ENCODE measurements at regions of chr17 and their contacts with region 1.

Region 1: DNA sequence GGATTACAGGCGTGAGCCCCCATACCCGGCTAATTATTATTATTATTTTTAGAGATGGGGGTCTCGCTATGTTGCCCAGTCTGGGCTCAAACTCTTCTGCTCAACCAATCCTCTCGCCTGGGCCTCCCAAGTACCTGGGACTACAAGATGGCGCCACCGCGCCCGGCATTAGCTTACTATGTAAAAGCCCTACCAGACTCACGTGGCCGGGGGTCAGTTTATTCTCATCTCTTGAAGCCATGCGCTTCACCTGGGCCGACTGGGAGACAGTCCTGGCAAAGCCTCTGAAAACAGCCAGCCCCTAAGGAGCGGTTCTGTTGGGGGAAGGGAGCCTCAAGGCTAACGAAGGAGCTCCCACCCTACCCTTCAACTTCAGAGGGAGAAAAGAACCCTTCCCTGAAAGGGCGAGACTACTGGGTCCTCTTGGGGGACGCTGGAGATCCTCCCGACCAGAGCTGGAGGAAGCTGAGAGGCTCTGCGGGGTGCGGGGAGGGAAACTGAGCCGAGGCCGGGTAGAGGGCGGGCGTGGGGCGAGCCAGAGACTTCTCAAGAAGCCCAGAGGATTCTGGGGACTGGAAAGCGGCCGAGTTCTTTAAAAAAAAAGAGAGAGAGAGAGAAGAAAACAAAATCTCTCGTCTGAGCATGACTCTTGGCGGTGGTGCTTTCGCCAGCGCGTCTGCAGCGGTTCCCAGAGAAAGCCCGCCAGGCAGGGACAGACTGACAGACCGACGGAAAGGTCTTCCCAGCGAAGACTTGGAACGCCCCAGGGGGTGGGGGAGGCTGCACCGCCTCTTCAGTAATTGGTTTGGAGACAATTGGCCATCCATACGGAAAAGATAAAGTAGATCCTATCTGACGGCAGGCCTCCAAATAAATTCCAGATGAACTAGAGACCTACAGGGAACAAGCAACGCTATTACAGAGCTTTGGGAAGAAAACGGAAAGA is 5.6 kb upstream of the TUBG2 start:
- DNase-seq: peak; percentile 73
- ATAC-seq: peak; percentile 90 to 91

Region 2: DNA sequence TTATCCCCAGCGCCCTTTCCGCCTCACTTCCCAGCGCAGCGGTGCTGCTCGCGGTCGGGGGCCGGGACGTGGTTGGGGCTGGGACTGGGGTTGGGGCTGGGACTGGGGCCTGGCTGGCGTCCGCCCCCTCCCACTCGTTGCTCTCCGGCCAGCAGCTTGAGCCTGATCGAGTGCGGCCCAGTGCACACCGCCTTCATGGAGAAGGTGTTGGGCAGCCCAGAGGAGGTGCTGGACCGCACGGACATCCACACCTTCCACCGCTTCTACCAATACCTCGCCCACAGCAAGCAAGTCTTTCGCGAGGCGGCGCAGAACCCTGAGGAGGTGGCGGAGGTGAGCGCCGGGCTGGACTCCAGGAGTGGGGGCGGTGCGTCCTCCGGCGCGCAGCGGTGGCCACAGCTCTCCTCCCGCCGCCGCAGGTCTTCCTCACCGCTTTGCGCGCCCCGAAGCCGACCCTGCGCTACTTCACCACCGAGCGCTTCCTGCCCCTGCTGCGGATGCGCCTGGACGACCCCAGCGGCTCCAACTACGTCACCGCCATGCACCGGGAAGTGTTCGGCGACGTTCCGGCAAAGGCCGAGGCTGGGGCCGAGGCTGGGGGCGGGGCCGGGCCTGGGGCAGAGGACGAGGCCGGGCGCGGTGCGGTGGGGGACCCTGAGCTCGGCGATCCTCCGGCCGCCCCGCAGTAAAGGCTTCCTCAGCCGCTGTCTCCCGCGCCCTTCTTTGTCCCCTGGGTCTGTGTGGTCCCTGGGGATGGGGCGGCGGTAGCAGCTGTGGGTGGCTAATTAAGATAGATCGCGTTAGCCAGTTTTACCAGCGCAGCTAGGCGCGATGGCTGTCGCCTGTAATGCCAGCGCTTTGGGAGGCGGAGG is 99.0 kb before region 1 on chr17:
- intact Hi-C with region 1: no loop called
- DNase-seq: peak; percentile 93
- ATAC-seq: peak; percentile 94 to 95

Region 3: DNA sequence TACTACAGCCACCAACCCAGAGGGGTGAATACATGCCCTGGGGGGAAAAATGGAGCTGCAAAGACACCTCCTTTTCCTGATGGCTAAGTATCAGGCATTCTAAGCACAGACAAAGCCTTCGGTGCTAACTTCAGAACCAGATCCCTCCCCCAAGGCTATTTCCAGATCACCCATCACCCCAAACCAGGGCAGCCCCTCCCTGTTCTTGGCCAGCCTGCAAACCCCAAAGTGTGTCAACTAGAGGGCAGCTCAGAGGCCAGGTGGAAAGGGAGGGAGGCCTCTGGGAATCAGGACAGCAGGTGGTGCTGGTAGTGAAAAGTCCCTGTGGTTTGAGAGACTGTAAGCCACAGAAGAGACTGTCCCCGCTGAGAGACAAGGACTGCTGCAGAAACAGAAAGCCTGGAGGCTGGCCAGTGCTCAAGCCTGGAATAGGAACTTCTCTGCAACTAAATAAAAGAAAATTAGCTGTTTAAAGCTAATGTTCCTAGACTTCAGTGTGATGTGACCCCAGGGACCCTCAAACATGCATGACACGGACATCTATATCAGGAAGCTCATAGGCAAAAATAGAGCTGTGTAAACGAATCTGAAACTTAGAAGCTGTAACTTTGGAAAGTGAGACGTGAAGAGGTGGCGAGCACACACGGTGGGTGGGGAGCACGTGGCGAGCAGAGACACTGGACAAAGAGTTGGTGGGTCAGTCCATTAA is 34.9 kb before region 1 on chr17:
- intact Hi-C with region 1: loop called in 1 of 2 experiments (anchors 5 kb)
- DNase-seq: peak; percentile 40
- ATAC-seq: peak; percentile 84 to 94

Region 4: DNA sequence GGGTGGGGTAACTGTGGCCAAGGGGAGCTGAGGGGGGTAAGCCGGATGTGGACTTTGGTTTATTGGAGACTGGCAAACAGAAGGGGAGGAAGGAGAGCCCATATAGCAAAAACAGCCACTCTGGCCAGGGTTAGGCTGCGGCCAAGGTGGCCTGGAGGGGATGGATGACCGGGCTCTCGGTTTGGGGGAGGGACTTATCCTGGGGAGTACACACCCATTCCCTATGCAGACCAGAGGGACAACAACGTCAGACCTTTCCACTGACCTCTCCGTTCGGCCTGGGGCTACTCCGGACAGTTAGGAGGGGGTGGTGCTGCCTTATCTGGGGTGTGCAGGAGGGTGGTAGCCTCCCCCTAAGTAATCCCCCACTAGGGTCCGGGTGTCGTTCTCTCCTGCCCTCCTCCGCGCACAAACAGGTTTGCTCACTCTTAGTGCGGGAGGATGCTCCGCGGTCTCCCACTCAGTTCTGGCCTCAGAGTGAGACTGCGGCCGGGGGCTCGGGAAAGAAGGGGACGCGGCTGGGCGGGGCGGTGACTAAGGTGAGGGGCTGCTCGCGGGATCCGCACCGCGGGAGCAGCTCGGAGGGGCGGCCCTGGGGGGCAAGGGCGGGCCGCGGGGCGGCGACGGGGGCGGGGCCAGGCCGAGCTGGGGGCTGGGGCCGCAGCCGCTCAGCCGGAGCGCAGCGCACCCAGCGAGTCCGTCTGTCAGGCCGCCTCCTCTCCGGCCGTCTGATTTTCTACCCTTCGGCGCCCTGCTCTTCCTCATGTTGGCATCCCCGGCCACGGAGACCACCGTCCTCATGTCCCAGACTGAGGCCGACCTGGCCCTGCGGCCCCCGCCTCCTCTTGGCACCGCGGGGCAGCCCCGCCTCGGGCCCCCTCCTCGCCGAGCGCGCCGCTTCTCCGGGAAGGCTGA is 126.7 kb after region 1 on chr17 and contains the start of gene WNK4:
- intact Hi-C with region 1: no loop called
- DNase-seq: no peak
- ATAC-seq: peak; percentile 60 to 62
- total RNA-seq, gene WNK4: not detected

Measured in left cardiac atrium (tissue), 4 donors.